ENCODE measurements at regions of chr2 and their contacts with region 1.

Region 1: GRCh38 chr2:230202430-230203109 is 17.2 kb downstream of the SP110 start:
- DNase-seq: peak; percentile 39
- ATAC-seq: peak; percentile 70
- H3K4me3 Mint-ChIP-seq: peak overlapping the region; percentile 76
- H3K27ac Mint-ChIP-seq: peak overlapping the region; percentile 87
- H3K4me1 Mint-ChIP-seq: peaks cover 42% of the 10 kb centered on the region
- H3K27me3 Mint-ChIP-seq: no peaks in the 10 kb centered on the region
- CTCF ChIP-seq: no peak

Region 2: GRCh38 chr2:230225486-230225885 is 22.9 kb after region 1 on chr2 and contains the start of gene SP140:
- CTCF ChIA-PET with region 1: interaction called, 17 read pairs
- POLR2A ChIA-PET with region 1: interaction called, 268 read pairs
- intact Hi-C with region 1: loop called (anchors 1 kb)
- DNase-seq: peak; percentile 55
- ATAC-seq: peak; percentile 74
- H3K4me3 Mint-ChIP-seq: peak within 1 kb of the TSS; percentile 92
- H3K27ac Mint-ChIP-seq: peak within 1 kb of the TSS; percentile 98
- H3K4me1 Mint-ChIP-seq: peaks cover 86% of the 10 kb centered on the region
- H3K27me3 Mint-ChIP-seq: no peaks in the 10 kb centered on the region
- CTCF ChIP-seq: no peak
- total RNA-seq, gene SP140: 295 and 330 TPM in 2 replicates

Region 3: GRCh38 chr2:230256733-230257332 is 54.3 kb after region 1 on chr2:
- CTCF ChIA-PET with region 1: interaction called, 6 read pairs
- POLR2A ChIA-PET with region 1: interaction called, 22 read pairs
- intact Hi-C with region 1: loop called (anchors 1 kb)
- DNase-seq: no peak
- ATAC-seq: no peak
- H3K4me3 Mint-ChIP-seq: peak overlapping the region; percentile 50
- H3K27ac Mint-ChIP-seq: peak overlapping the region; percentile 89
- H3K4me1 Mint-ChIP-seq: peaks cover 46% of the 10 kb centered on the region
- H3K27me3 Mint-ChIP-seq: no peaks in the 10 kb centered on the region
- CTCF ChIP-seq: no peak

Region 4: DNA sequence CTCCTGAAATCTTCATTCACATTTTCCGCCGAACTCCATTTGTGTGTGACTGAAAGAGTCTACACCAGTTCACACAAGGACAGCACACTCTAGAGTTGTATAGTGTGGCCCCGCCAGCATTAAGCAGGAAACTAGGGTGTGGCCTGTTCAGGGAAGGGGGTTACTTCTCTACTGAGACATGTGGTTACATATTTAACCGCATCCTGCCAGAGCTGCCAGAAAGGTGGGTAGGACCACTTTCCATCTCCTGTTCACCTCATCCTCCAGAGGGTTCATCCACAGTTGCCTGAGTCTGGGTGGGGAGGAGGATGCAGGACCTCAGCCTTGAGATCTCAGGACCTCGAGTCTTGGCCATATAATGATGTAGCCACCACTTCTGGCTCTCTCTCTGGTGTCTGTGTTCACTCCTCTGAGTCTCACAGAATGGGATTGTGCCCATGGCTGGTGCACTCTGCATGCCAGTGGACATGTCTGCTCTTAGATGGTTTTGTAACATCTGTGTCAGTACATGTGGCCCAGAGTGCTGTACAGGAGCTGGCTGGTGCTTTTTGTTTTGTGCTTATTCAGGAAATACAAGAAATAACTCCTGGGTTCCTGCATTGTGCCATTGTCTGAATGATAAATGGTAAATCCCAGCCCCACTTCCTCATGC is 116.8 kb after region 1 on chr2:
- CTCF ChIA-PET with region 1: interaction called, 6 read pairs
- POLR2A ChIA-PET with region 1: interaction called, 15 read pairs
- intact Hi-C with region 1: no loop called
- DNase-seq: no peak
- ATAC-seq: peak; percentile 86
- H3K4me3 Mint-ChIP-seq: peak overlapping the region; percentile 56
- H3K27ac Mint-ChIP-seq: peak overlapping the region; percentile 90
- H3K4me1 Mint-ChIP-seq: peaks cover 78% of the 10 kb centered on the region
- H3K27me3 Mint-ChIP-seq: no peaks in the 10 kb centered on the region
- CTCF ChIP-seq: no peak

Region 5: DNA sequence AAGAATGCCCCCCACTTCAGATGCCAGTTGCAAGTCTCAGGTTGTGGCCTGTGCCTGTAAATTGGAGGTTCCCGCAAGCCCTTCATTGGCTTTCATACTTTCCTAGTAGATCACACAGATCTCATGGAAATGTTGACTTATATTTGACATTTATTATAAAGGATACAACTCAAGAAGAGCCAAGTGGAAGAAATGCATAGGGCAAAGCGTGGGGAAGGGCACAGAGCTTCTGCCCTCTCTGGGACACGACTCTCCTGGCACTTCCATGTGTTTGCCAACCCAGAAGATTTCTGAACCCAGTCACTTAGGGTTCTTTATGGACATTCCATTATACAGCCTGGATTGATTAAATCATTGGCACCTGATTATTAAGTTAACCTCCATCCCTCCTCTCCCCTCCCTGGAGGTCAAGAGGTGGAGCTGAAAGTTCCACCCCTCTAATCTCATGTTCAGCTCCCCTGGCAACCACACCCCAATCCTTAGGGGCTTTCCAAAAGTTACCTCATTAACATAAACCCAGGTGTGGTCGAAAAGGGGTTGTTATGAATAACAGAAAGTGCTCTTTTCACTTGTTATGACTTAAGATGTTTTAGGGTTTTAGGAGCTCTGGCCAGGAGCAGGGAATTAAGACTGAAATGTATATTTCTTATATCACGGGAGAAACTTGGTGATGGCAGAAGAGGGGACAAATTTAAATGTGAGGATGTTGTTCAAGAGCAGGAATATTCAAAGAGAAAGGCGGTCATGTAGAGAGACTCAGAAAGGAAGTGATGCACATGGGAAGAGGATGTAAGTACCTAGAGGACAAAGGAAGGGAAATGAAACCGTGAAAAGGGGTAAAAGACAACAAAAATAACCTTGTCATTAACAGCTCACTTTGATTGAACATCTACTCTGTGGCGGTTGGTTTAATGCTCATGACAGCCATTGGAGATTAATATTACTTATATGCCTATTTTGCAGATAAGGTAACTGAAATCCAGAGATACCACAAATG is 245.2 kb after region 1 on chr2:
- CTCF ChIA-PET with region 1: interaction called, 6 read pairs
- POLR2A ChIA-PET with region 1: interaction called, 14 read pairs
- intact Hi-C with region 1: loop called (anchors 2 kb)
- DNase-seq: no peak
- ATAC-seq: peak; percentile 81
- H3K4me3 Mint-ChIP-seq: peak overlapping the region; percentile 83
- H3K27ac Mint-ChIP-seq: peak overlapping the region; percentile 99
- H3K4me1 Mint-ChIP-seq: peaks cover 93% of the 10 kb centered on the region
- H3K27me3 Mint-ChIP-seq: no peaks in the 10 kb centered on the region
- CTCF ChIP-seq: no peak

Region 6: GRCh38 chr2:230798769-230799399 is 596.3 kb after region 1 on chr2:
- CTCF ChIA-PET with region 1: interaction called, 10 read pairs
- POLR2A ChIA-PET with region 1: interaction called, 11 read pairs
- intact Hi-C with region 1: loop called (anchors 1 kb)
- DNase-seq: no peak
- ATAC-seq: peak; percentile 46
- H3K4me3 Mint-ChIP-seq: no peak overlapping the region
- H3K27ac Mint-ChIP-seq: no peak overlapping the region
- H3K4me1 Mint-ChIP-seq: peaks cover 14% of the 10 kb centered on the region
- H3K27me3 Mint-ChIP-seq: no peaks in the 10 kb centered on the region
- CTCF ChIP-seq: no peak

Region 7: DNA sequence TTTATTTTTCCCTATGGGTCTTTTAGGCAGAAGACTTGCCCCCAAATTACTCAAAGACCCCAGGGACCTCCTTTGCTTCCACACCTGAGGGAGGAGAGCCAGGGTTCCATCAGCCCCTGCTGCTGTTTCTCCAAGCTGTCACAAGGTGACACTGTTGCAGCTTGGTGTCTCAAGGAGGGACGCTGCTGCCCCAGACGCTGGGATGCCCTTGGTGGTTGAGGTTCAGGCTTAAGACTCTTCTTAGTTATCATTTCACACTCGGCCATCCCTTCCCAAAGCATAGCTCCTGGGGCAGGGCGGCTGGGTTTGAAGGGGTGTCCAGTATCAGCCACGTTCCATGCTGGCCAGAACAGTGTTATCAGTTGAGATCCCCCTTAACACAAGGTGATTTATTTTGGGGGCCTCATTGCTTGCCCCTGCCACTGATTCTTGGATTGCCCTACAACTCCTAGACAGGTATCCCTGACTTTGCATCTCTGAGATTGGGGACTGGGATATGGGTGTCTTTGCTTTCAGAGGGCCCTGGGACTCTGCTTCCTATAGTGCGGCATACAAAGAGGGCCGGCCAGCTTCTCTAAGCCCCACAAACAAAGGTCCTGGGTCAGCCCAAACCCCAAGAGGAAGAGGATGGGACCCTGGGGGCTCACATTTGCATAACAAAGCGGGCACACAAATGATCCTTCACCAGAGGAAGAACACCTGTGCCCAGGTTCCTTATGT is 699.8 kb after region 1 on chr2:
- CTCF ChIA-PET with region 1: no interaction called
- POLR2A ChIA-PET with region 1: no interaction called
- intact Hi-C with region 1: no loop called
- DNase-seq: peak; percentile 19
- ATAC-seq: peak; percentile 90
- H3K4me3 Mint-ChIP-seq: no peak overlapping the region
- H3K27ac Mint-ChIP-seq: no peak overlapping the region
- H3K4me1 Mint-ChIP-seq: peaks cover 18% of the 10 kb centered on the region
- H3K27me3 Mint-ChIP-seq: no peaks in the 10 kb centered on the region
- CTCF ChIP-seq: no peak

Measured in activated B cell treated with CpG ODN at 0.5 μM for 24 hours (primary cell).